ENCODE measurements at regions of chr3 and their contacts with region 1.

Region 1: DNA sequence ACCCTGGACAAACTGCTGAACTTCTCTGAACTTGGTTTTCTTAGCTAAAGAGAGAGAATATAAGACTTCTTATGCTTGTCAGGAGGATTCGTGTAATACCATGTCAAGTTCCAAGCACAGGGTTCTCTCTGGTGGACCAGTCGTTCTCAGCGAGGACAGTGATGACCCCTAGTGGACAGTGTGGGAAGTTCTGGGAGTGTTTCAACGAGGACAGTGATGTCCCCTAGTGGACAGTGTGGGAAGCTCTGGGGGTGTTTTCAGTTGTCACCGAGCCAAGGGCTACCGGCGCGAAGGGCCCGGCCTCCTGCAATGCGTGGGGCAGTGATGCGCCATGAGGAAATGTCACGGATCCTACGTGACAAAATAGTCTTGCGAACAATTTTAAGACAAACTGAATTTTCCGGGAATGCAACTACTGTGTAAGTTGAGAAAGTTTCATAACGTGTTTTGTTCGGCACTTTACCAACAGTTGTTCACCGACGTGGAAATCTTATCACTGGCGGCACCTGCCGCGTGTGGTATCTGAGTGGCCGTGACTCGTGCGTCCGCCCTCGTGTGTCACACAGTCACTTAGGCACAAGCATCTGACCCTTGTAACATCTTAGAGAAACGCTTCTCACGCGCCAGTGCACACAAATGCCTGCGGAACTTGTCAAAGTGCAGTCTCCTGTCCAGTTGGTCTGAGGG is 39.3 kb upstream of the MUC4 start:
- DNase-seq: peak; percentile 86 to 92
- H3K4me3 ChIP-seq: no peak overlapping the region
- H3K27ac ChIP-seq: no peak overlapping the region
- H3K4me1 ChIP-seq: peaks cover 67% of the 10 kb centered on the region
- H3K27me3 ChIP-seq: no peaks in the 10 kb centered on the region
- CTCF ChIP-seq: peak; percentile 100

Region 2: DNA sequence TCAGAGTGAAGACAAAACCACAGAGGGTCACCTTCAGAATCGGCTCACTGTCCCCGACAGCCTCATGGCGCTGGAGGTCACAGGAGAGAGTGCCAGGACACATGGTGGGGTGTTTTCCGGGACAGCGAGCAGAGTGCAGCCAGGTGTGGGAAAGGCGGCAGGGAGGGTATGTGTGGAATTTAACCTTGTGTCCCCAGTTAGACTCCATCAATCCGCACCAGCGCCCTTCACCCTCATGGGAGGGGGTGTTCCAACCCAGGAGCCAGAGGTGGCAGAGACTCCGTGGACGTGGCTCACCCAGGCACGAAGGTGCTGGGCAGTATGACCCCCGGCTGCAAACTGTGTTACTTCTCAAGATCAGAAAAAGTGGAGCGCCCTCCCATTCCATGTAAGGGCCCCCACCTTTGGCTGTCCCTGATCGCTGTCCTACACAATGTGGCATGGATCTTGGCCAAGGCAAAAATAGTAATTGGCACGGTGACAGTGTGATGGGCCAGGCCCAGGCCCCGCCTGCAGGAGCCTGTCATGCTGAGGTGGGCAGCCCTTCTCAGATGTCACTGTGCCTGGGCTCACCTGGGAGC is 770.3 kb before region 1 on chr3:
- CTCF ChIA-PET with region 1: no interaction called
- POLR2A ChIA-PET with region 1: no interaction called
- intact Hi-C with region 1: no loop called
- DNase-seq: no peak
- H3K4me3 ChIP-seq: no peak overlapping the region
- H3K27ac ChIP-seq: no peak overlapping the region
- H3K4me1 ChIP-seq: no peaks in the 10 kb centered on the region
- H3K27me3 ChIP-seq: no peaks in the 10 kb centered on the region
- CTCF ChIP-seq: no peak

Region 3: DNA sequence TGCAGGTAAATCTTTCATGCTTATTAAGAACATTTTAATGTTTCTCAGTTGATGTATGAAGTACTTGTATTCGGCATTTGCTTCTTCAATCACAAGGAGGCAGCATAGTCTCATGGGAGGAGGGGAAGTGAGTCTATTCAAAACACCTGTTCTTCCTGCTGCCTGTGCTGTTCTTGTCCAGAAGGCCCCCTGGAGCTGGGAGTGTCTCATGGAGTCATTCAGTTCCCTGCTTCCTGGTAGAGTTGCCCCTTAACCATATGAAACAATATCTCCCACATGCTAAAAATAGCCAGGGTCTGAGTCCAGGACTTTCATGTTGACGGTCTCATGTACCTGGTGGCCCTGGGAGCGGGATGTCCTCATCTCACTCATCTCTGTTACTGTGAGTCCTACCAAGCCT is 292.4 kb before region 1 on chr3:
- CTCF ChIA-PET with region 1: no interaction called
- POLR2A ChIA-PET with region 1: interaction called, 3 read pairs
- intact Hi-C with region 1: loop called (anchors 1 kb)
- DNase-seq: peak; percentile 51 to 80
- H3K4me3 ChIP-seq: no peak overlapping the region
- H3K27ac ChIP-seq: peak overlapping the region; percentile 64
- H3K4me1 ChIP-seq: peaks cover 34% of the 10 kb centered on the region
- H3K27me3 ChIP-seq: no peaks in the 10 kb centered on the region
- CTCF ChIP-seq: peak; percentile 74

Region 4: DNA sequence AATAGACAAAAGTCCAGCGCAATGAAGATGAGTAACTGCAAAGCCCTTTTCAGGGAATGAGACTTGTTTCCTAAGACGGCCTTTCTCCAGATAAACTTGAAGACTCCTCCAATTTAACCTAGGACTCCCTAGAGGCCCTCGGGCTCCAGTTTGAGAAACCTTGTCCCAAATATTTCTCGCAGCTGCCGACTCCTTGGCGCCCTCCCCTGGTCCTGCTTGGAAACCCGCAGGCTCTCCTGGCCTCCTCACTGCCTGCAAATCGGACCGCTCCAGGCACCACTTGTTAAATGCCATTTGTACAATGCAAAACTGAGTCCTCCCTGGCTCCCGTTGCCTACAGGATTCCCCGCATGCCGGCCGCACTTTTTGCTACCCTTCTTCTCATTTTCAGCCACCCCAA is 76.1 kb before region 1 on chr3:
- CTCF ChIA-PET with region 1: no interaction called
- POLR2A ChIA-PET with region 1: no interaction called
- intact Hi-C with region 1: loop called (anchors 2 kb)
- DNase-seq: peak; percentile 59 to 75
- H3K4me3 ChIP-seq: no peak overlapping the region
- H3K27ac ChIP-seq: no peak overlapping the region
- H3K4me1 ChIP-seq: no peaks in the 10 kb centered on the region
- H3K27me3 ChIP-seq: no peaks in the 10 kb centered on the region
- CTCF ChIP-seq: peak; percentile 85

Region 5: DNA sequence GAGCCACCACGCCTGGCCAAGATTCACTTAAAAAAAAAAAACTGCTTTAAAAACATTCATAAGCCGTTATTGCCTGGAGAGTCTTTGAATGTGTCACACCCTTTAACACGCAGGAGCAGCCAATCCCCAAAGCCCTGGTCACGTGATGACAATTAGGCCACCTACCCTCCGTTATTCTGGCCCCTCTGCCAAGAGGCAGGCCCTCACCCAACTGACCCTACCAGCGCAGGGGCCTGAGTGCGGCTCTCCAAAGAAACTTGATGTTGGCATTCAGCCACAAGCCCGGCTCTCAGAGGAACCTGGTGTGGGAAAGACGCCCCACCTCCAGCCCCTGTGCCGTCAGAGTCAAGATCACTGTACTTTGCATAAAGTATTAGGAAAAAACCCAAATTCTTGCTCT is 27.7 kb before region 1 on chr3:
- CTCF ChIA-PET with region 1: interaction called, 10 read pairs
- POLR2A ChIA-PET with region 1: interaction called, 31 read pairs
- intact Hi-C with region 1: loop called (anchors 1 kb)
- DNase-seq: peak in 1 of 2 experiments; percentile 74
- H3K4me3 ChIP-seq: peak overlapping the region; percentile 69; the same call in 1 of the 2 replicates
- H3K27ac ChIP-seq: peak overlapping the region; percentile 95
- H3K4me1 ChIP-seq: peaks cover 59% of the 10 kb centered on the region
- H3K27me3 ChIP-seq: no peaks in the 10 kb centered on the region
- CTCF ChIP-seq: no peak